ENCODE measurements at regions of chr7 and their contacts with region 1.

Region 1: DNA sequence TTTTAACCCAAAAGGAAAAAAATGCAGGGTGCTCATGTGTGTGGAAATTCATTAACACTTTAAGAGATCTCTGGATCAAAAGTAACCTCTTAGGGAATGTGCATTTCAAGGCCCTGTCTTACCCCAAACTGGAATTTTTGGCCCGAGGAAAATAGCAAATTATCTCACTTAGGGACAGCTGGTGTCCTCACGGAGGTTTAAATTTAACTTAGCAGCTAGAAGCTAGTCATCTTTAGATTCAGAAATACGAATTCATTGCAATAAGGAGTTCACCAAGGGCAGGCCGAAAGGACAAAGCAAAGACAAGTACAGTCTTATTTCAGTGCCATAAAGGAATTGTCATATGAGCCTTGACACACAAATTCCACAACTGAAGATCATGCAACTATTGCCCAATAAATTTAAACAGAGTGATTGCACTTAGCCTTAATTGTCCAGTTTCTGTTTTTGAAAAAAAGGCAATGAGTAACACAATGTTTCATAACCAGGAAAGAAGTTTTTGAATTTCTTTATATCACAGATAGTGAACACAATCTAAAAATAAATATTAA is 22.4 kb upstream of the SEMA3C start:
- DNase-seq: peak; percentile 86
- ATAC-seq: no peak
- H3K4me3 ChIP-seq: peak overlapping the region; percentile 25; the same call in 1 of the 2 replicates
- H3K27ac ChIP-seq: peak overlapping the region; percentile 99
- H3K4me1 ChIP-seq: peaks cover 41% of the 10 kb centered on the region
- H3K27me3 ChIP-seq: no peaks in the 10 kb centered on the region
- CTCF ChIP-seq: no peak

Region 2: DNA sequence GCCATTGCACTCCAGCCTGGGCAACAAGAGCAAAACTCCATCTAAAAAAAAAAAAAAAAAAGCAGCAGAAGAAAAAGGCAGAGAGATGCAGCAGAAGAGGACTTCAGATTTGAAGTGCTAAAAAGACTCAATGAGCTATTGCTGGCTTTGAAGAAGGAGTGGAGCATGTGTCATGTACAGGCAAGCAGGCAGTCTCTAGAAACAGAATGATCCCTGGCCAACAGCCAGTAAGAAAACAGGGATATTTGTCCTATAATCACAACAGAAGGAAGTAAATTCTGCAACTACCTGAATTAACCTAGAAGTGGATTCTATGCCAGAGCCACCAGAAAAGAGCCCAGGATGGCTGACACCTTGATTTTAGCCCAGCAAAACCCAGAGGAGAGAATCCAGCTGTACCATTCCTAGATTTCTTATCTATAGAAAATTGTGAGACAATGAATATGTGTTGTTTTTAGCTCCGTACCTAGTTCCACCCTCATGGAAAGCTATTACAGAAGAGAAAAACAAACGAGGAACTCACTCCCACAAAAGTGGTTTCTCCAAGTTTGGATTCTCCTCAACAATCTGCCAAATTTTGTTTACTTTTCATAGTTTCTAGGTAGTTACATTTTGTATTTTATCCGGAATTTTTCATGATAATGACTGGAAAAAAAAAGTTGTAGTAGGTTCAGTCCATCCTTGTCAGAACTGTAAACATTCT is 1004.9 kb before region 1 on chr7:
- CTCF ChIA-PET with region 1: no interaction called
- POLR2A ChIA-PET with region 1: no interaction called
- intact Hi-C with region 1: no loop called
- DNase-seq: peak; percentile 13
- ATAC-seq: no peak; the same call in 1 of the 2 replicates
- H3K4me3 ChIP-seq: no peak overlapping the region
- H3K27ac ChIP-seq: no peak overlapping the region
- H3K4me1 ChIP-seq: no peaks in the 10 kb centered on the region; the same call in 1 of the 2 replicates
- H3K27me3 ChIP-seq: no peaks in the 10 kb centered on the region
- CTCF ChIP-seq: no peak

Region 3: DNA sequence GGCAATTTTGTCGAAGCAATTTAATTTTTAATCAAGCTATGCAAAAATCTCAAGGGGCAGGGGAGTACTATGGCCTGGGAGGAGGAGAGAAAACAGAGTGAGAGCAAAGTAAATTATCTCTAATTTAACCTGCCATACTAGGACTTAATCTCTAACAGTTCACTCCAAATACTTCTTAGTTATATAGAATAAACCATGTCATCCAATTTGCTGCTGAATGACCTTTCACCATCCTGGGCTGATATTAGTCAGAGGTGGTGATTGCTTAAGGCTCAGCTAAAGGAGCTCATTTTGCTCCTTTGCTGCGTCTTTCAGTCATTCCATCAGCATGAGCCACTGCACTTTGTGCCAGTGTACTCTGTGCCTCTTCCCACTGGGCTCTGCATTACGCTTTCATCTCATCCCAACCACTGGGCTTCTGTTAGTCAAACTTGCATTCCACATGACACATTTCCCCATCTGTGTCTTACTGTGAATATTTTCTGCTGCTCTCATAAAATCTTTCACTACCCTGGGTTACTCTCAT is 218.6 kb before region 1 on chr7:
- CTCF ChIA-PET with region 1: no interaction called
- POLR2A ChIA-PET with region 1: interaction called, 6 read pairs
- intact Hi-C with region 1: loop called (anchors 2 kb)
- DNase-seq: peak; percentile 98
- ATAC-seq: peak; percentile 98
- H3K4me3 ChIP-seq: peak overlapping the region; percentile 38; the same call in 1 of the 2 replicates
- H3K27ac ChIP-seq: peak overlapping the region; percentile 98
- H3K4me1 ChIP-seq: peaks cover 40% of the 10 kb centered on the region
- H3K27me3 ChIP-seq: no peaks in the 10 kb centered on the region
- CTCF ChIP-seq: no peak

Region 4: GRCh38 chr7:80967071-80967916 is 26.0 kb after region 1 on chr7:
- CTCF ChIA-PET with region 1: no interaction called
- POLR2A ChIA-PET with region 1: no interaction called
- intact Hi-C with region 1: no loop called
- DNase-seq: no peak
- ATAC-seq: no peak
- H3K4me3 ChIP-seq: no peak overlapping the region
- H3K27ac ChIP-seq: no peak overlapping the region
- H3K4me1 ChIP-seq: no peaks in the 10 kb centered on the region
- H3K27me3 ChIP-seq: no peaks in the 10 kb centered on the region
- CTCF ChIP-seq: no peak

Region 5: GRCh38 chr7:81074406-81074805 is 133.1 kb after region 1 on chr7:
- CTCF ChIA-PET with region 1: no interaction called
- POLR2A ChIA-PET with region 1: no interaction called
- intact Hi-C with region 1: loop called (anchors 2 kb)
- DNase-seq: no peak
- ATAC-seq: no peak
- H3K4me3 ChIP-seq: no peak overlapping the region
- H3K27ac ChIP-seq: peak overlapping the region; percentile 98
- H3K4me1 ChIP-seq: peaks cover 30% of the 10 kb centered on the region
- H3K27me3 ChIP-seq: no peaks in the 10 kb centered on the region
- CTCF ChIP-seq: no peak

Region 6: DNA sequence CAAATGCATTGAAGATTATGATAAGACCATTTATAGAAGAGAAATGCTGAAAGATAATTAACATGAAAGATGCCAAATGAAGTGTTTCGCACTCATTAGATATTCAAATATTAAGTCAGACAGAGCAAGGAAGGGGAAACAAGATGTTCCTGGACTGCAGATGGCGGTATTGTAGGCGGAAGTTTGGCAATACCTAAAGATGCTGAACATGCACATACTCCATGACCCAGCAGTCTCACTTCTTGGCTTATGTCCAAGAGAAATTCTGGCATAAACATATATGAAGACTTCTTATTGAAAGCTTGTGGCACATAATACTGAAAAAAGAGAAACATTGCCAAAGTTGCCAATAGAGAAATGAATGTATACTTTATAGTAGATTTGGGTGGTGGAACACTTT is 302.9 kb after region 1 on chr7:
- CTCF ChIA-PET with region 1: no interaction called
- POLR2A ChIA-PET with region 1: no interaction called
- intact Hi-C with region 1: loop called (anchors 1 kb)
- DNase-seq: peak; percentile 16
- ATAC-seq: no peak
- H3K4me3 ChIP-seq: no peak overlapping the region
- H3K27ac ChIP-seq: no peak overlapping the region
- H3K4me1 ChIP-seq: peaks cover 12% of the 10 kb centered on the region
- H3K27me3 ChIP-seq: no peaks in the 10 kb centered on the region
- CTCF ChIP-seq: peak; percentile 43; the same call in 1 of the 2 replicates

Region 7: DNA sequence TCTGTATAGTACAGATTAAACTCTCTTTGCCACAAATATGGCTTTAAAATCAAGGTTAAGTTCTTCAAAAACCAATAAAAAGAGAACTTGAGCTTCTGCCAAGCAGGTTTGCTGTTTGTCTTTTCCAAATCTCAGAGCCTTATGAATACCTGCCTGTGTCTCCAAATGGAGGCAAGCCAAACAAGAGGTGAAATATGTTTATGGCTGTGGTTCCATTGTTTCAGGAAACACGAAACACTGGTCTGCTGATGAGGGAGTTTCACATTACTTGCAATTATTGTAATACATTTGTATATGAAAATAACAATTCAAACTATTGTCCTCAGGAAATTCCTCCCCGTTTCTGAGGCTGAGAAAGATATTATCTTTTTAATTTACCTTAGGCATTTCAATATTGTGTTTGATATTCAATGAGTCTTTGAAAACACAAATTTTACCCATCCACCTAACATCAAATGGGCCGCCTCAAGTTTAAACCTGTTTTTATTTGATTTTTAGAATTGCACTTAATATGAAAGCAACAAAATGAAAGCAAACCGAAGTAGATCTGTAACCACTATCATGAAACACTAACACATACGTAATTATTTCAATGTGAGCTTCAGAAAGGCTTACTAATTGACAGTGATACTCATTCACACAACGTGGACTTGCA is 469.3 kb after region 1 on chr7:
- CTCF ChIA-PET with region 1: no interaction called
- POLR2A ChIA-PET with region 1: no interaction called
- intact Hi-C with region 1: loop called (anchors 2 kb)
- DNase-seq: peak; percentile 94
- ATAC-seq: peak; percentile 60
- H3K4me3 ChIP-seq: peak overlapping the region; percentile 24
- H3K27ac ChIP-seq: peak overlapping the region; percentile 89
- H3K4me1 ChIP-seq: peaks cover 64% of the 10 kb centered on the region
- H3K27me3 ChIP-seq: no peaks in the 10 kb centered on the region
- CTCF ChIP-seq: no peak